HCT116 (cell line): ENCODE measurements at regions of chr5 and their contacts with region 1.

Region 1: GRCh38 chr5:39547553-39548154 is 122.9 kb upstream of the DAB2 start:
- DNase-seq: peak; percentile 43
- ATAC-seq: peak; percentile 73
- H3K4me3 ChIP-seq: no peak overlapping the region
- H3K27ac ChIP-seq: no peak overlapping the region
- H3K4me1 ChIP-seq: 0 out of 4 replicates have a peak, but pooled peaks cover 0 to 4% of the 10 kb centered on the region in 2 experiments
- H3K27me3 ChIP-seq: no peaks in the 10 kb centered on the region
- CTCF ChIP-seq: peak; percentile 72 to 75 (median 75); a peak in 5 of 6 replicates
- POLR2A ChIP-seq: no peak
- RAD21 ChIP-seq: peak; percentile 79

Region 2: GRCh38 chr5:39424736-39425637 is 122.7 kb before region 1 on chr5 and contains the start of gene DAB2:
- CTCF ChIA-PET with region 1: interaction called, 13 read pairs
- POLR2A ChIA-PET with region 1: interaction called, 3 read pairs
- RAD21 ChIA-PET with region 1: interaction called in 1 of 2 experiments, 5 read pairs
- intact Hi-C with region 1: loop called (anchors 5 kb)
- DNase-seq: peak; percentile 69
- ATAC-seq: peak; percentile 93
- H3K4me3 ChIP-seq: peak within 1 kb of the TSS; percentile 59 to 80
- H3K27ac ChIP-seq: peak within 1 kb of the TSS; percentile 31
- H3K4me1 ChIP-seq: peaks cover 11 to 12% of the 10 kb centered on the region in 2 experiments
- H3K27me3 ChIP-seq: no peaks in the 10 kb centered on the region
- CTCF ChIP-seq: peak in 2 of 3 experiments; percentile 58 to 65; a peak in 4 of 6 replicates
- POLR2A ChIP-seq: peak; percentile 42
- RAD21 ChIP-seq: no peak
- total RNA-seq, gene DAB2: 5.5 TPM